A673 (cell line): ENCODE measurements at regions of chr11 and their contacts with region 1.

Region 1: DNA sequence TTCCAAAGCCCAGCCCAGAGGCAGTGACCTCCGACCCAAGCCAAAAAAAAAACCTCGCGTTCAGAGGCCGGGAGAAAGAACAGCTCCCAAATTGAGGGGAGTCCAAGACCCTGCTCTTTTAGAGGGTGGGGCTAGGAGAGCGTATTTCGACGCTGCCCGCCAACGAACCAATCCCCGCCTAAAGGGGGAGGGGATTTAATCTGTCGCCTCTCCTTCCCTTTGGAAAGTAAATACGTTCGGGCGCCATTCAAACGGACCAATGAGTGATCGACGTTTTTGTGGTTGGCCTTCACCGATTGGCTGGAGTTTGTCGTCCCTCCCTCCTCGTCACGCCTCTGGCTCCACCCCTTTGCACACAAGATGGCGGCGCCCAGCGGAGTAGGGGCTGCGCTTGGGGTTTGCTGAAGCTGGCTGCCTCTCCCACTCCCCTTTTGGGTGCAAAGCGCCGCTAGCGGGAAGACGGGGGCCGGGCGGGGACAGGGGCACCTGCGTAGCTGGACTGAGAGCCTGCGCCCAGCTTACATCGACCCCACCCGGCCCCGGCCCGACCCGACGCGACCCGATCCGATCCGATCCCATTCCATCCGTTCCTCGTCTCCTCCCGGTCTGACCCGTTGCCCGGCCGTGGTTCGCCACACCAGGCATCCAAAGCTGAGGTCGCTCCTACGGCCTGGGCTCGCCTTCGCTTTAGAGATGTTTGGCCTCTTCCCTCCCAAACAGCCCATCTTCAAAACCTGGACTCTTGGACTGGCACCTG is at the start of gene RNF26:
- DNase-seq: peak; percentile 100
- H3K4me3 ChIP-seq: peak within 1 kb of the TSS; percentile 76
- H3K27ac ChIP-seq: peak within 1 kb of the TSS; percentile 91
- H3K4me1 ChIP-seq: peaks cover 39% of the 10 kb centered on the region
- H3K27me3 ChIP-seq: no peaks in the 10 kb centered on the region
- CTCF ChIP-seq: no peak
- total RNA-seq, gene RNF26: 81.3 and 89.3 TPM in 2 replicates

Region 2: DNA sequence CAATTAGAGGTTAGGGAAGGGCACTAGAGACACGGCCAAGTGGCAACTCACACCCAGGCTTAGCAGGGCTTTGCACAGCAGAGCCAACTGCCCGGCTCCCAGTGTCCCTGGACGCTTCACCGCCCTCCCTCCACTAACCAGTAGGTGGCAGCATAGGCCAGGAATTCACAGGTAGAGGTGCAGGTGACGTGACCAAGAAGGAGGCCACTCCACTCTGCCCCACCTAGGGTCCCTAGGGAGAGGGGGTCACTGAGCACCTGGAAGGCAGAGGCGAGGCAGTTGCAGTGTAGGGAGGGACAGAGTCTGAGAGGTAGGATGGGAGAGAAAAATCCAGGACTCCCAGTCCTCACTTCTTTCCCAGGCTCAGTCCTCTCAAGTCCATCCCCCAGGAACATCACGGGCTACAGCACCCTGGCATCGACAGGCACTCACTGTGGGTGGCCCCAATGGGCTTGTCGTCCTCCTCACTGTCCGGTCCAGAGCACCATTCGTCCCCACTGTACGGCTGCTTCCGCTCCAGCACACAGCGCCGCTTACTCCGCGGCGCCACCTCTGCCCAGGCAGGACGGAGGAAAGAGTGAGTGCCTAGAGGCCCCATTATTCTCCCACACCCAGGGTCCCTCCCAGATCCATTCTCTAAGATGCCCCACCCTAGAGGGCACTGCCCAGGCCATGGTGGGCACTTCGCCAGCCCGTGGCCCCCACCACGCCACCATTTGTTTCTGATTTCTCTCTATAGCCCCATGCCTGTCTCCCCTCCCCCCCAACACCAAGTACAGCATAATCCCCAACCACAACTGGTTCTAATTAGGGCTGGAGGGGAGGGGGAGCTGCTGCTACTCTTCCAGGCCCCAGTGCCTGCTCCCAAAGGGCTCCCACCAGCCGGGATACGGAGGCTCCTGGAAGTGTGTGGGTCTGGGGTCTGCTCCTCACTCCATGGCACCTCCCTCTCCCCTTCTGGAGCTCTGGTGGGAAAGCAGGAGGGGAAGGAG is 427.0 kb before region 1 on chr11:
- CTCF ChIA-PET with region 1: no interaction called
- POLR2A ChIA-PET with region 1: no interaction called
- intact Hi-C with region 1: loop called (anchors 10 kb)
- DNase-seq: peak; percentile 85
- H3K4me3 ChIP-seq: peak overlapping the region; percentile 20
- H3K27ac ChIP-seq: peak overlapping the region; percentile 73
- H3K4me1 ChIP-seq: peaks cover 49% of the 10 kb centered on the region
- H3K27me3 ChIP-seq: no peaks in the 10 kb centered on the region
- CTCF ChIP-seq: peak; percentile 97

Region 3: GRCh38 chr11:119323538-119324033 is 10.8 kb before region 1 on chr11:
- CTCF ChIA-PET with region 1: interaction called, 33 read pairs
- POLR2A ChIA-PET with region 1: interaction called, 4 read pairs
- intact Hi-C with region 1: no loop called
- DNase-seq: peak; percentile 85
- H3K4me3 ChIP-seq: no peak overlapping the region
- H3K27ac ChIP-seq: no peak overlapping the region
- H3K4me1 ChIP-seq: peaks cover 12% of the 10 kb centered on the region
- H3K27me3 ChIP-seq: no peaks in the 10 kb centered on the region
- CTCF ChIP-seq: peak; percentile 93

Region 4: GRCh38 chr11:119373921-119374631 is 39.7 kb after region 1 on chr11:
- CTCF ChIA-PET with region 1: interaction called, 12 read pairs
- POLR2A ChIA-PET with region 1: no interaction called
- intact Hi-C with region 1: no loop called
- DNase-seq: peak; percentile 89
- H3K4me3 ChIP-seq: no peak overlapping the region
- H3K27ac ChIP-seq: no peak overlapping the region
- H3K4me1 ChIP-seq: peaks cover 21% of the 10 kb centered on the region
- H3K27me3 ChIP-seq: no peaks in the 10 kb centered on the region
- CTCF ChIP-seq: peak; percentile 98

Region 5: GRCh38 chr11:119432484-119433357 is 98.4 kb after region 1 on chr11:
- CTCF ChIA-PET with region 1: interaction called, 10 read pairs
- POLR2A ChIA-PET with region 1: no interaction called
- intact Hi-C with region 1: no loop called
- DNase-seq: peak; percentile 83
- H3K4me3 ChIP-seq: no peak overlapping the region
- H3K27ac ChIP-seq: peak overlapping the region; percentile 2
- H3K4me1 ChIP-seq: peaks cover 15% of the 10 kb centered on the region
- H3K27me3 ChIP-seq: no peaks in the 10 kb centered on the region
- CTCF ChIP-seq: no peak